CD8-positive, alpha-beta memory T cell (primary cell): ENCODE measurements at regions of chr16 and their contacts with region 1.

Region 1: DNA sequence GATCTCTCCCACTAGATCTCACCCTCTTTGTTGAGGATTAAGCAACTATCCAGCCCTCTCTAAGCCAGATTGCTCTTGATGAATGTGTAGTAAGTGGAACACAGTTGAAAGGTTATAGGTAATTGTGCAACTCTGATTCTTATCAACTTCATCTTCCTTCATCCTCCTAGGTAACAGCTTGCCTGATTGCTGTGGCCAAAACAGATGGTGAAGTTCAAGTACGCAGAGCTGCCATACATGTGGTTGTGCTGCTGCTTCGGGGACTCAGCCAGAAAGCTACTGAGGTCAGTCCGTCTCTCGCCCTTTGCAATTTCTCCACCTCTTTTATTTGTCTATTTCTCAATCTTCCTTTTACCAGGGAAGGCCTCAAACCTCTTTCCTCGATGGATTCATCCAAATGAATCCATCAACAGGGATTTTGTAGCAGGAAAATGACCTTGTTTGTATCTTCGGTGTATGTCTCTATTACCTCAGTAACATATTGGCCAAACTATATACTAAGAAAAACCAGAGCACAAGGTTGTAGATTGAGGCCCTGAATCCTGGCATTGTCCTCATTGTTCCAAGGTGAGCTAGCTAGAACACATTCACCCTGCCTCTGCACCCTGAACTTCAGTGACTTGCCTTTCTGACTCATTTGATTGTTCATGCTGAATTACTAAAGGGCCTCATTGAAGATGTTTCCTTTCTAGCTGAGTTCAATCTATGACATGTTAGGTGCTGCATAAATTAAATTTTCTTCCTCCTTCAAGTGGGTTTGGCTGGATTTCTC is 65.1 kb upstream of the HAS3 start:
- DNase-seq: no peak
- H3K4me3 ChIP-seq: no peak overlapping the region
- H3K4me3 Mint-ChIP-seq: no peak overlapping the region
- H3K27ac ChIP-seq: no peak overlapping the region
- H3K27ac Mint-ChIP-seq: no peak overlapping the region
- H3K4me1 ChIP-seq: no peaks in the 10 kb centered on the region
- H3K4me1 Mint-ChIP-seq: no peaks in the 10 kb centered on the region
- H3K27me3 ChIP-seq: no peaks in the 10 kb centered on the region
- H3K27me3 Mint-ChIP-seq: no peaks in the 10 kb centered on the region

Region 2: DNA sequence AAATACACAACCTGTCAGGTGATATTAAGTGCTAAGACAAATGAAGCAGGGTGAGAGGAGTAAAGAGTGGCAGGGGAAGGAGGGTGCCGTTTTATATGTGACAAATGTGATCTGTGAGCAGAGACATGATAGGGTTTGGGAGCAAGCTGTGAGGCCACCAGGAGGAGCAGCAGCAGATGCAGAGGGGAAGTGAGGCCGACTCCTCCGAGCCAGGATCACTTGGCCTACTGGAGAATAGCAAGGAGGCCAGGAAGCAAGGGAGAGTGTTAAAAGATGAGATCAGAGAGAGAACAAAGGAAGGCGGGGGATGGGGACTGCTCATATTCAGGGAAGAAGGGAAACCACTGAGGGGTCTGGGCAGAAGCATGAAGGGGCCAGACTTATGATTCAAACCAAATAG is 67.6 kb before region 1 on chr16:
- CTCF ChIA-PET with region 1: no interaction called
- POLR2A ChIA-PET with region 1: no interaction called
- DNase-seq: no peak
- H3K4me3 ChIP-seq: no peak overlapping the region
- H3K4me3 Mint-ChIP-seq: no peak overlapping the region
- H3K27ac ChIP-seq: no peak overlapping the region
- H3K27ac Mint-ChIP-seq: peak overlapping the region in 3 of 8 donors; percentile 15 to 64 (median 47)
- H3K4me1 ChIP-seq: no peaks in the 10 kb centered on the region
- H3K4me1 Mint-ChIP-seq: no peaks in the 10 kb centered on the region
- H3K27me3 ChIP-seq: no peaks in the 10 kb centered on the region
- H3K27me3 Mint-ChIP-seq: peaks cover 0 to 3% of the 10 kb centered on the region in 2 donors

Region 3: GRCh38 chr16:69073161-69073669 is 32.9 kb after region 1 on chr16:
- CTCF ChIA-PET with region 1: no interaction called
- POLR2A ChIA-PET with region 1: no interaction called
- DNase-seq: no peak
- H3K4me3 ChIP-seq: no peak overlapping the region
- H3K4me3 Mint-ChIP-seq: no peak overlapping the region
- H3K27ac ChIP-seq: no peak overlapping the region
- H3K27ac Mint-ChIP-seq: peak overlapping the region in 2 of 8 donors; percentile 0 to 12
- H3K4me1 ChIP-seq: no peaks in the 10 kb centered on the region
- H3K4me1 Mint-ChIP-seq: no peaks in the 10 kb centered on the region
- H3K27me3 ChIP-seq: no peaks in the 10 kb centered on the region
- H3K27me3 Mint-ChIP-seq: peaks cover 0 to 1% of the 10 kb centered on the region in 2 donors

Region 4: DNA sequence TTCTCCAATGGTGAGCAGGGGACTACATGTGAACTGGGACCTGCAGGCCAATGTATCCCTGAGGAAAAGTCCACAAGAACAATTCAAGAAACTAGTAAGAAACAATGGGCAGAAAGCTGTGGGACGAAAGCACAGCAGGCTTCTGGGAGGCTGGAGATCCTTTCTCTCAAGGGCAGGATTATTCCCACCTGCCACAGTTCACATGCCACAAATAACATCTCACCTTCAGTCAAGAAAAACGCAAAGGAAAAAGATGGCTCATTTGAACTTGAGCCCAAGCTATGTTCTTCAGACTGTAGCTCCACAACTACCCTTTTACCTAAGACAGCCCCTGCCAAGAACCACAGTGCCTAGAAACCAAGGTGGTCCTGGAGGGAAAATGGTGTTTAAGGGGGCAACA is 78.1 kb after region 1 on chr16:
- CTCF ChIA-PET with region 1: no interaction called
- POLR2A ChIA-PET with region 1: interaction called, 12 read pairs
- DNase-seq: no peak
- H3K4me3 ChIP-seq: no peak overlapping the region
- H3K4me3 Mint-ChIP-seq: no peak overlapping the region
- H3K27ac ChIP-seq: no peak overlapping the region
- H3K27ac Mint-ChIP-seq: peak overlapping the region in 1 of 8 donors; percentile 54
- H3K4me1 ChIP-seq: no peaks in the 10 kb centered on the region
- H3K4me1 Mint-ChIP-seq: peaks cover 4 to 22% (median 8%) of the 10 kb centered on the region in 3 donors
- H3K27me3 ChIP-seq: no peaks in the 10 kb centered on the region
- H3K27me3 Mint-ChIP-seq: no peaks in the 10 kb centered on the region

Region 5: DNA sequence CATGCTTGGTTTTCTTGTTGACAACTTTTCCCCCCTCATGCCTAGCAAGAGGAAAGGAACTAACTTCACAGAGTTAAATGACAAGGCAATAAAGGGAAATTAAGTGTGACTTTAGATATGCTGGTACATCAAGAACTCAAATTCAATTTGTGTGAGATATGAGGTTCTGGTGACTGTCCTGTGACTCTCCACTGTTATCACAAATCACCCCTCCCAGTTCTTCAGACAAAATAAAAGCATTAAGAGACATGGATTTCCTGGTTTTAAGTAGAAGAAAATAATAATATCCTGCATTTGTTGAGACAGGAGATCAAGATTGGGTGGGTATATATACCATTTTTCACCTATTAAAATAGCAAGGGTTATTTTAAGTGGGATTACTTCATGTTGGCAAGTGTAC is 192.8 kb after region 1 on chr16:
- CTCF ChIA-PET with region 1: no interaction called
- POLR2A ChIA-PET with region 1: no interaction called
- DNase-seq: no peak
- H3K4me3 ChIP-seq: no peak overlapping the region
- H3K4me3 Mint-ChIP-seq: no peak overlapping the region
- H3K27ac ChIP-seq: no peak overlapping the region
- H3K27ac Mint-ChIP-seq: no peak overlapping the region
- H3K4me1 ChIP-seq: no peaks in the 10 kb centered on the region
- H3K4me1 Mint-ChIP-seq: peaks cover 4 to 9% (median 5%) of the 10 kb centered on the region in 3 donors
- H3K27me3 ChIP-seq: no peaks in the 10 kb centered on the region
- H3K27me3 Mint-ChIP-seq: no peaks in the 10 kb centered on the region